Activated CD8-positive, alpha-beta T cell treated with anti-CD3 and anti-CD28 coated beads for 36 hours (primary cell): ENCODE measurements at regions of chr9 and their contacts with region 1.

Region 1: DNA sequence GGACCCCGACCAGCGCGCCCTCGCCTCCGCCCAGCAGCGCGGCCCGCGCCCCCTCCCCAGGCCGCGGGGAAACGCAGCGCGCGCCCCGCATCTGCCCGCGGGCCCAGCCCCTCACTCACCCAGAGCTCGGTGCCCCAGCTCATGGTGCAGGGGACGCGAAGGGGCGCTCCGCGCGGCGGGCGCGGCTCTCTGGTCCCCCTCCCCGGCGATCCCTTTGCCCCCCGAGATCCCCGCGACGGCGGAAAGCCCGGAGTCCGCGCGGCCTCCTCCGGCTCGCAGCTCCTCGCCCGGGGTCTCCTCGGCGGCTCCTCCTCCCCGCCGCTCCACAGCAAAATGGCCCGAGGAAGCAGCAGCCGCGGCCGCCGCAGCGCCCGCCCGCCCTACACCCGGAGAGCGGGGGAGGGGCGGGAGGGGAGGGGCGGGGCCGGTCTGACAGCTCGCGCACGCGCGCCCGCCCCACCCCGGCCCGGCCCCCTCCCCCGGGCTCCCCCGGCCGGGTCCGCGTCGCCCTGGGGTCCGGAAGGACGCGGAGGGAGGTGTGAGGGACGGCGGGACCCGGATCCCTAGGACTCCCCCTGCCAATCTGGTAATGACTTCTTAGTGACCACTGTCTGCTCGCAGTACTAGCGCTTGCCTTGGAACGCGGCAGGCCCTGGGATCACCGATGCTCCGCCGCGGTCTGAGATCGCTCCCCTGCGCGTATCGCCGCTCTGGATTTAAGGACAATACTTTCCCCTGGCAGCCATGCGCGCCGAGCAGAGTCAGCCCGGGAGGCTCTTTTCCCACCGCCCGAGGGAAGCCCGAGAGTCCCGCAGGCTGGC is at the start of gene FNBP1:
- DNase-seq: peak; percentile 81
- ATAC-seq: peak; percentile 72
- H3K4me3 Mint-ChIP-seq: peak within 1 kb of the TSS; percentile 97
- H3K27ac Mint-ChIP-seq: peak within 1 kb of the TSS; percentile 100
- H3K4me1 Mint-ChIP-seq: peaks cover 30% of the 10 kb centered on the region
- H3K27me3 Mint-ChIP-seq: no peaks in the 10 kb centered on the region
- CTCF ChIP-seq: no peak
- total RNA-seq, gene FNBP1: 266 to 268 TPM

Region 2: GRCh38 chr9:129889941-129890717 is 152.9 kb before region 1 on chr9:
- CTCF ChIA-PET with region 1: interaction called, 18 read pairs
- POLR2A ChIA-PET with region 1: interaction called, 39 read pairs
- intact Hi-C with region 1: loop called (anchors 2 kb)
- DNase-seq: peak; percentile 92
- ATAC-seq: peak; percentile 6
- H3K4me3 Mint-ChIP-seq: peak overlapping the region; percentile 92
- H3K27ac Mint-ChIP-seq: peak overlapping the region; percentile 99
- H3K4me1 Mint-ChIP-seq: peaks cover 66% of the 10 kb centered on the region
- H3K27me3 Mint-ChIP-seq: no peaks in the 10 kb centered on the region
- CTCF ChIP-seq: no peak

Region 3: DNA sequence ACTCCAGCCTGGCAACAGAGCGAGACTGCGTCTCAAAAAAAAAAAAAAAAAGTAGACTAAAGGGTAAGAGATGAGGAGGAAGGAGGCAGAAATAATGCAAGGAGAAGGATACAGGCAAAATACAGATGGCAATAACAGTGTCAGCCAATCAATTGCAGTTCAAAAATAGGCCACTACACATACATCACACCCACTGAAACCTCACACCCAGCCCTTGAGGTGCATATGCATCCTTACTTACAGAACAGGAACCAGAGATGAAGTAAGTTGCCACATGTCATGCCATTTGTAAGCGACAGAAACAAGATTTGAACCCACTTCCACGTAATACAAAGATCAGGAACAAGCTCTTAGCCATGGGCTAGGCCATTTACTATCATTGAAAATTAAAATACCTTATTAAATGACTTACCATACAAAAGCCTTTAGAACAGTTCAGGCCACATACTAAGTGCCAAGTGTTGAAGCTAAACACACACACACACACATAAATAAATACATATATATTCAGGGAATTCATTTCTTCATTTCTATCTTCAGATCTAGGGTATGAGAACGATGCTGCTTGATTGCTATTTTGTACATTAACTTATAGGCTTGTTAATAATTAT is 98.4 kb before region 1 on chr9:
- CTCF ChIA-PET with region 1: no interaction called
- POLR2A ChIA-PET with region 1: interaction called, 3 read pairs
- intact Hi-C with region 1: loop called (anchors 5 kb)
- DNase-seq: peak; percentile 81
- ATAC-seq: peak; percentile 88
- H3K4me3 Mint-ChIP-seq: peak overlapping the region; percentile 19
- H3K27ac Mint-ChIP-seq: peak overlapping the region; percentile 81
- H3K4me1 Mint-ChIP-seq: peaks cover 53% of the 10 kb centered on the region
- H3K27me3 Mint-ChIP-seq: no peaks in the 10 kb centered on the region
- CTCF ChIP-seq: peak; percentile 28

Region 4: DNA sequence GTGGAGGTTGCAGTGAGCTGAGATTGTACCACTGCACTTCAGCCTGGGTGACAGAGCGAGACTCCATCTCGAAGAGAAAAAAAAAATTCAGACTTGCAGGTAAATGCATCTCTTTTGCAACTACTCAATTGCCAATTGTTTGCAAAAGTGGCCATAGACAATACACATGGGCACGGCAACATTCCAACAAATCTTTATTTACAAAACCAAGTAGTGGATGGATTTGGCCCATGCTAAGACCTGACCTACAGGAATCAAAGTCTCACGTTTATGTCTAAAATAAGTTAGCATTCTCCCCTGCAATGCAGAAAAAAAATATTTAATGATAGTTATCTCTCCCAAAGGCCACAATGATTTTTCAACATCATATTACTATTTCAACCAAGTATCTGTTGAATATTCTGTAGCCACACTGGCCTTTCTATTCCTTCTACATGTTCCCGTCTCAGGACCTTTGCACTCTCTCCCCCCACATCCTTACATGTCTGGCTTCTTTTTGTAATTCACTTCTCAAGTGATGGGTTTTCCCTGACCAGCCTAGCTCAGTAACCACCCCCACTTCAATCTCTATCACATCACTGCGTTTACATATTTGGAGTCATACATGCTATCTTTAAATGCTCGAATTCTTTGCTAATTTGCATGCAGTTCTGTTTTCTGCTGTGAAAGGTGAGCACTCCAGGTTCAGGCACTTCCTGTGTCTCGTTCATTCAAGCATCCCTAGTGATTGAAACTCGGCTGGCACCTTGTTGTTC is 54.3 kb before region 1 on chr9:
- CTCF ChIA-PET with region 1: interaction called, 8 read pairs
- POLR2A ChIA-PET with region 1: interaction called, 110 read pairs
- intact Hi-C with region 1: loop called (anchors 5 kb)
- DNase-seq: peak; percentile 42
- ATAC-seq: peak; percentile 51
- H3K4me3 Mint-ChIP-seq: peak overlapping the region; percentile 31
- H3K27ac Mint-ChIP-seq: peak overlapping the region; percentile 93
- H3K4me1 Mint-ChIP-seq: peaks cover 75% of the 10 kb centered on the region
- H3K27me3 Mint-ChIP-seq: no peaks in the 10 kb centered on the region
- CTCF ChIP-seq: no peak

Region 5: DNA sequence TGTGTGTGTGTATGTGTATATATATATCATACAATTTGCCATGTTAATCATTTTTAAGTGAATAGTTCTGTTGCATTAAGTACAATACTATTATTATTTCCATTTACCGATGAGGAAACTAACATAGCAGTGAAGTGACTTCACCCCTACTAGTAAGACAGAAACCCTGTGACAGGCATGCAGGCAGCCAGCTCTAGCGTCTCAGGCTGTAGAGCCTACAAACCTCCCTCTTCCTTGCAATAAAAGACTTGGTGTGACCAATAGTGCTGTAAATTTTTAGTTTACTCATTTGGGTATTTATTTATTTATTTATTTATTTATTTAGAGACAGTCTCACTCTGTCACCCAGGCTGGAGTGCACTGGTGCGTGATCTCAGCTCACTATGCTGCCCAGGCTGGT is 24.8 kb before region 1 on chr9:
- CTCF ChIA-PET with region 1: interaction called, 5 read pairs
- POLR2A ChIA-PET with region 1: interaction called, 16 read pairs
- intact Hi-C with region 1: no loop called
- DNase-seq: peak; percentile 44
- ATAC-seq: no peak
- H3K4me3 Mint-ChIP-seq: no peak overlapping the region
- H3K27ac Mint-ChIP-seq: peak overlapping the region; percentile 95
- H3K4me1 Mint-ChIP-seq: peaks cover 75% of the 10 kb centered on the region
- H3K27me3 Mint-ChIP-seq: no peaks in the 10 kb centered on the region
- CTCF ChIP-seq: no peak

Region 6: GRCh38 chr9:130053504-130054324 is 10.7 kb after region 1 on chr9 and contains the start of gene GPR107:
- CTCF ChIA-PET with region 1: interaction called, 10 read pairs
- POLR2A ChIA-PET with region 1: interaction called, 18 read pairs
- intact Hi-C with region 1: no loop called
- DNase-seq: peak; percentile 89
- ATAC-seq: peak; percentile 91
- H3K4me3 Mint-ChIP-seq: peak within 1 kb of the TSS; percentile 94
- H3K27ac Mint-ChIP-seq: peak within 1 kb of the TSS; percentile 92
- H3K4me1 Mint-ChIP-seq: peaks cover 27% of the 10 kb centered on the region
- H3K27me3 Mint-ChIP-seq: no peaks in the 10 kb centered on the region
- CTCF ChIP-seq: no peak
- total RNA-seq, gene GPR107: 18.2 to 19.0 TPM